ENCODE measurements at regions of chr12 and their contacts with region 1.

Region 1: GRCh38 chr12:6752921-6753771 is at the start of gene MLF2:
- DNase-seq: peak; percentile 98 to 99
- ATAC-seq: peak; percentile 93 to 94
- H3K4me3 ChIP-seq: peak within 1 kb of the TSS; percentile 98
- H3K27ac ChIP-seq: peak within 1 kb of the TSS; percentile 97 to 98
- H3K4me1 ChIP-seq: peaks cover 21% of the 10 kb centered on the region
- CTCF ChIP-seq: no peak; the same call in 2 of the 3 replicates
- EP300 ChIP-seq: no peak
- POLR2A ChIP-seq: peak; percentile 94
- RAD21 ChIP-seq: no peak; a peak in 2 of 5 replicates
- polyA plus RNA-seq, gene MLF2: 302 and 310 TPM in 2 replicates

Region 2: DNA sequence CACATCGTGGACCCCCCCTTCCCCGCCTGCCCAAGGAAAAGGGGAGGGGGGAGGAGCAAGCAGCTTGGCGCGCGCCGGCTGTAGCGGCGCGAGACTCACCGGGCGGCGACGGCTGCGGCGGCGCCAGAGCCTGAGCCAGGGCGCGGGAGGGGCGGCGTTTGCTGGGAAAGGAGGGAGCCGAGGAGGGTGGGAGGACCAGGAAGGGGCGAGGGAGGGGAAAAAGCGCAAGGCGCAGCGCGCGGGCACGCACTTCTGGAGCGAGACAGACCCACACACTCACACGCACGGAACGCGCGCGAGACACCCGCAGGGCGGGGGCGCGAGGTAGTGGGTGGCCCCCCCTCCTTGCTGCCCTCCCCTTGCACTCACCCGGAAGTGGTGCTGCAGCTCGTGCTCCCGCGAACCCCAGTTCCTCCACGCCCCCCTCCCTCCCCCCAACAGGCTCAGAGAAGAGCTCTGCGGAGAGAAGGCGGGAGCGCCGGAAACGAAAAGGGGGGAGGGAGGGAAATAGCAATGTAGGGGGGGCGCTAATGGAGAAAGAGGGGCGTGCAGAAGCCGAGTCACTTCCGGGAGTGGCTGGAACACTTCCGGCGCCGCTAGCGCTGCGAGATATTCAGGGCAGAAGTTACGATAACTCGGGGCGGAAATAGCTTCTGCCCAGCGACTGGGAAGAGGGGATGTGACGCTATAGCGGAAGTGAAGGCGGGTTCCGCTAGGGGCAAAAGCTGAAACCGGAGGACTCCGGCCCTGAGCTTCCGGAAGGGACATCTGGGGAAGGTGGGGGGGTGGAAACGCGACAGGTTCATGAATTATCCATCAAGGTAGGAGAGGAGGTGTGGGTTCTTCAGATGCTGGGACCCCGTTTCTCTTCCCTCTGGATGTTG is 63.9 kb before region 1 on chr12 and contains the start of gene ZNF384:
- CTCF ChIA-PET with region 1: interaction called, 10 read pairs
- POLR2A ChIA-PET with region 1: interaction called, 28 read pairs
- DNase-seq: peak; percentile 100
- ATAC-seq: peak; percentile 91 to 92
- H3K4me3 ChIP-seq: peak within 1 kb of the TSS; percentile 94
- H3K27ac ChIP-seq: peak within 1 kb of the TSS; percentile 98 to 100
- H3K4me1 ChIP-seq: peaks cover 18% of the 10 kb centered on the region; the same call in 2 of the 3 replicates
- CTCF ChIP-seq: no peak
- EP300 ChIP-seq: no peak
- POLR2A ChIP-seq: peak; percentile 59
- RAD21 ChIP-seq: 0 out of 5 replicates have a peak, but pooled peaks of 1 of the 2 experiments have one; percentile 13
- polyA plus RNA-seq, gene ZNF384: 59.6 and 81.9 TPM in 2 replicates

Region 3: DNA sequence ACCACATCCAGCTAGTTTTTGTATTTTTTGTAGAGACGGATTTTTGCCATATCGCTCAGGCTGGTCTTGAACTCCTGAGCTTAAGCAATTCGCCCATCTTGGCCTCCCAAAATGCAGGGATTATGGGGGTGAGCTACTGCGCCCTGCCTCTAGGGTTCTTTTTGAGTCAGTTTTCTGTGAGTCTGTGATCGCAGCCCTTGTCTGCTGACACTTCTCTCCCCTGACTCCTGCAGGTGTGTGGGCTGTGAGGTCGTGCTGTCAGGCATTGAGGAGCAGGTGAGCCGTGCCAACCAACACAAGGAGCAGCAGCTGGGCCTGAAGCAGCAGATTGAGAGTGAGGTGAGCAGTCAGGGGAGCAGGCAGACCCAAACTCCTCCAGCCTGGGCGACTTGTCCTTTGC is 23.0 kb before region 1 on chr12:
- CTCF ChIA-PET with region 1: interaction called, 52 read pairs
- POLR2A ChIA-PET with region 1: interaction called, 8 read pairs
- DNase-seq: no peak
- ATAC-seq: peak in 1 of 2 experiments; percentile 36; a peak in 2 of 6 replicates
- H3K4me3 ChIP-seq: no peak overlapping the region
- H3K27ac ChIP-seq: no peak overlapping the region
- H3K4me1 ChIP-seq: peaks cover 4% of the 10 kb centered on the region; the same call in 2 of the 3 replicates
- CTCF ChIP-seq: no peak
- EP300 ChIP-seq: no peak
- POLR2A ChIP-seq: no peak
- RAD21 ChIP-seq: no peak

Region 4: GRCh38 chr12:6771091-6771495 is 17.9 kb after region 1 on chr12:
- CTCF ChIA-PET with region 1: interaction called, 670 read pairs
- POLR2A ChIA-PET with region 1: interaction called, 118 read pairs
- DNase-seq: no peak
- ATAC-seq: no peak
- H3K4me3 ChIP-seq: no peak overlapping the region
- H3K27ac ChIP-seq: peak overlapping the region in 1 of 2 experiments; percentile 6; a peak in 1 of 6 replicates
- H3K4me1 ChIP-seq: peaks cover 49% of the 10 kb centered on the region
- CTCF ChIP-seq: no peak
- EP300 ChIP-seq: no peak
- POLR2A ChIP-seq: no peak
- RAD21 ChIP-seq: no peak

Region 5: DNA sequence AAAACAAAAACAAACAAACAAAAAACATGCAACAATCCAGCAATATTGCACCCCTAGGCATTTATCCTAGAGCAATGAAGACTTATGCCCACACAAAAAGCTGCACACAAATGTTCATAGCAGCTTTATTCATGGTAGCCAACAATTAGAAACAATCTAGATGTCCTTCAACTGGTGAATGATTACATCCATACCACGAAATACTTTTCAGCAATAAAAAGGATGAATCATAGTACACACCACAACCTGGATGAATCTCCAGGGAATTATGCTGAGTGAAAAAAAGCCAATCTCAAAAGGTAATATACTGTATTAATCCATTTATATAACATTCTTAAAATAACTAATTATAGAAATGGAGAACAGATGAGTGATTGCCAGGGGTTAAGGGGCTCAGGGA is 54.0 kb after region 1 on chr12:
- CTCF ChIA-PET with region 1: interaction called, 22 read pairs
- POLR2A ChIA-PET with region 1: no interaction called
- DNase-seq: no peak
- ATAC-seq: 0 out of 6 replicates have a peak, but pooled peaks of 1 of the 2 experiments have one; percentile 31
- H3K4me3 ChIP-seq: no peak overlapping the region
- H3K27ac ChIP-seq: no peak overlapping the region
- H3K4me1 ChIP-seq: peaks cover 6% of the 10 kb centered on the region; the same call in 1 of the 3 replicates
- CTCF ChIP-seq: no peak
- EP300 ChIP-seq: no peak
- POLR2A ChIP-seq: no peak
- RAD21 ChIP-seq: no peak

Region 6: DNA sequence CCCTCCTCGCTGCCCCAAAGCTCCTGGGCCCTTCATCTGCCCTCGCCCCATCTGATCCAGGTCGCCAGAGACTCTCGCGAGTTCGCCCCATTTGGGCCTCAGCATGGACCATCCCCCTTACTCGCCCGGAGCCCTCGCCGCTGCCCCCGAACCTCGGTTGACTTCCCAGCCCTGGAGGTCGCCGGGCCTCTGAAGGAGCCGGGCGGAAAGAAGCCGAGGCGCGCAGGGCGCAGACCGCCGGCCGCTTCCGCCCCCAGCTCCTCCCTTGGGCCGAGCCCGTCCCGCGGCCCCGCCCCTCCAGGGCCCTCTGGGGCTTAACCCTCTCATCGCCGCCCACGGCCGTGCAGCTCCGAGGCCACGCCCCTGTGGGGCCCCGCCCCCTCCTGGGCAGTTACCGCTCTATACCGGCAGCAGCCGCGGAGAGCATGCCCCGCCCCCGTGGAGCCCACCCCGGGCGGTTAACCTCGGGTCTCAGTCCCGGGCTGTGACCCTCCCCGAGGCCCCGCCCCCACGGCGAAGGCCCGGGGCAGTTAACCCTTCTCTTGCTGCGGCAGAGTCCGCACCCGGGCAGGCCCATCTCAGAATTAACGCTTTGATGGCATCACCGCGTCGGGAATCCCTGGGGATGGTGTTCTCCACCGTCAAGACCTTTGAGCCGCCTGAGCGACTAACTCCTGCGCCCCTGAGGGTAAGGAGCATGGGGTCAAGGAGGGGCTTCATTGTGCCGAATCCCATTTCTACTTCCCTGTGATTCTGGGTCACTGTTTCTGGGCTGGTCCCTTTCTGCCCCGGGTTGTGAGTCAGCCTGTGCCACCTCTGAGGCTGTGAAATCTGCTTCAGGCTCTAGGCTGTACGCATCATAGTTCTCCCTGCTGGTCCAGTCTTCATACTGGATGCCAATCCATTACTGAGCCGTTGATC is 120.2 kb after region 1 on chr12 and contains the start of gene SPSB2:
- CTCF ChIA-PET with region 1: interaction called, 15 read pairs
- POLR2A ChIA-PET with region 1: interaction called, 9 read pairs
- DNase-seq: peak; percentile 88 to 98
- ATAC-seq: peak; percentile 65 to 81
- H3K4me3 ChIP-seq: peak within 1 kb of the TSS; percentile 77
- H3K27ac ChIP-seq: peak within 1 kb of the TSS; percentile 93 to 94
- H3K4me1 ChIP-seq: peaks cover 42% of the 10 kb centered on the region
- CTCF ChIP-seq: no peak
- EP300 ChIP-seq: no peak
- POLR2A ChIP-seq: peak; percentile 82
- RAD21 ChIP-seq: peak; percentile 7 to 26; a peak in 3 of 5 replicates
- polyA plus RNA-seq, gene SPSB2: 15.3 and 16.8 TPM in 2 replicates

Region 7: GRCh38 chr12:7460375-7461259 is 707.5 kb after region 1 on chr12:
- CTCF ChIA-PET with region 1: no interaction called
- POLR2A ChIA-PET with region 1: no interaction called
- DNase-seq: peak; percentile 66
- ATAC-seq: peak; percentile 97 to 99
- H3K4me3 ChIP-seq: no peak overlapping the region
- H3K27ac ChIP-seq: no peak overlapping the region
- H3K4me1 ChIP-seq: no peaks in the 10 kb centered on the region
- CTCF ChIP-seq: peak; percentile 93
- EP300 ChIP-seq: no peak
- POLR2A ChIP-seq: no peak
- RAD21 ChIP-seq: peak; percentile 95 to 98